Activated T-helper 2 cell treated with anti-CD3 and anti-CD28 coated beads, Interferon-gamma antibody, Interleukin-2, Interleukin-4, amounts not matched to agents 10 μg/mL and 5 μg/mL and 100 μg/mL, durations not matched to agents 14 hours and 24 hours and 36 hours (primary cell): ENCODE measurements at regions of chr6 and their contacts with region 1.

Region 1: GRCh38 chr6:85464260-85464644 is 14.4 kb downstream of the NT5E start:
- DNase-seq: no peak
- H3K4me3 Mint-ChIP-seq: peak overlapping the region; percentile 50
- H3K27ac Mint-ChIP-seq: peak overlapping the region; percentile 93
- H3K4me1 Mint-ChIP-seq: peaks cover 69% of the 10 kb centered on the region
- H3K27me3 Mint-ChIP-seq: no peaks in the 10 kb centered on the region

Region 2: GRCh38 chr6:85360794-85361642 is 103.2 kb before region 1 on chr6:
- intact Hi-C with region 1: loop called (anchors 2 kb)
- DNase-seq: no peak
- H3K4me3 Mint-ChIP-seq: no peak overlapping the region
- H3K27ac Mint-ChIP-seq: peak overlapping the region; percentile 34
- H3K4me1 Mint-ChIP-seq: peaks cover 13% of the 10 kb centered on the region
- H3K27me3 Mint-ChIP-seq: no peaks in the 10 kb centered on the region

Region 3: GRCh38 chr6:85449818-85450759 is 14.2 kb before region 1 on chr6 and contains the start of gene NT5E:
- intact Hi-C with region 1: loop called (anchors 1 kb)
- DNase-seq: peak; percentile 47
- H3K4me3 Mint-ChIP-seq: peak within 1 kb of the TSS; percentile 96
- H3K27ac Mint-ChIP-seq: peak within 1 kb of the TSS; percentile 88
- H3K4me1 Mint-ChIP-seq: peaks cover 63% of the 10 kb centered on the region
- H3K27me3 Mint-ChIP-seq: peaks cover 18% of the 10 kb centered on the region
- total RNA-seq, gene NT5E: 15.4 and 16.4 TPM in 2 replicates

Region 4: GRCh38 chr6:85642774-85643536 is 178.7 kb after region 1 on chr6 and contains the start of gene SYNCRIP:
- intact Hi-C with region 1: loop called (anchors 1 kb)
- DNase-seq: peak; percentile 98
- H3K4me3 Mint-ChIP-seq: peak within 1 kb of the TSS; percentile 97
- H3K27ac Mint-ChIP-seq: peak within 1 kb of the TSS; percentile 100
- H3K4me1 Mint-ChIP-seq: peaks cover 41% of the 10 kb centered on the region
- H3K27me3 Mint-ChIP-seq: peaks cover 4% of the 10 kb centered on the region
- total RNA-seq, gene SYNCRIP: 197 TPM in 2 replicates

Region 5: GRCh38 chr6:85678602-85679444 is 214.6 kb after region 1 on chr6:
- intact Hi-C with region 1: loop called (anchors 2 kb)
- DNase-seq: peak; percentile 98
- H3K4me3 Mint-ChIP-seq: peak overlapping the region; percentile 99
- H3K27ac Mint-ChIP-seq: peak overlapping the region; percentile 84
- H3K4me1 Mint-ChIP-seq: peaks cover 39% of the 10 kb centered on the region
- H3K27me3 Mint-ChIP-seq: no peaks in the 10 kb centered on the region